AG04450 (cell line): ENCODE measurements at regions of chr11 and their contacts with region 1.

Region 1: GRCh38 chr11:34051349-34052035 is at the start of gene CAPRIN1:
- DNase-seq: peak; percentile 63
- H3K4me3 ChIP-seq: peak within 1 kb of the TSS; percentile 91
- H3K27ac ChIP-seq: peak within 1 kb of the TSS; percentile 99
- H3K27me3 ChIP-seq: no peaks in the 10 kb centered on the region
- CTCF ChIP-seq: no peak
- polyA plus RNA-seq, gene CAPRIN1: 202 and 251 TPM in 2 replicates

Region 2: DNA sequence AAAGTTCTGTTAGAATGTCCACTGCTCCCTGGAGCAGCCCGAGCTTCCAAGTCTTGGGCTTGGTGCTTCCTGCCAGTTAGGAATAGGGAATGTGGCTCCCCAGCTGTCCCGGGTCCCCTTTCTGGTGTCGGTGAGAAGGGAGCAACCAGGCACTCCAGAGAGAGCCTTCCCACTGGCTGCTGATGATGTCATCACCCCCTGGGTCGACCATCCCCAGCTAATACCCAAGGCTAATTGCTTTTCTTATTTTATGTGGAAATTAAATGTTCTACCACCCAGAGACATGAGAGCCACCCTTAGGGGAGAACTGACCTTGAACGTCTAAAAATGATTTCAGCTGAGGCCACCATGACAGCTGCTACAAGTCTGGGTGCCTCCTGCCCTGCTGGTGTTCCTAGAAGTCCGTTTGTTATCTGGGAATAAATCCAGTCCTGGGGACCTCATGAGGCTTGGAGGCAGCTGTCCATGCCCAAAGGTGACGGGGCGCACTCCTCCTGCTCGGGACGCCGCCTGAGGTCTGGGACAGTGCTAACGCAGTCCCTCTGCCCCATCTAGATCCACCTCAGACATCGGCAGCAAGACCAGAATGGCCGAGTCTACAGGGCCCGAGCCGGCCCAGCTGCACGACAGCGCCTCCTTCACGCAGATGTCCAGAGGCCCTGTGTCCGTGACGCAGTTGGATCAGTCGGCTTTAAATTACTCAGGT is 393.1 kb before region 1 on chr11:
- CTCF ChIA-PET with region 1: no interaction called
- POLR2A ChIA-PET with region 1: no interaction called
- DNase-seq: no peak
- H3K4me3 ChIP-seq: no peak overlapping the region
- H3K27ac ChIP-seq: no peak overlapping the region
- H3K27me3 ChIP-seq: no peaks in the 10 kb centered on the region
- CTCF ChIP-seq: no peak

Region 3: GRCh38 chr11:34105079-34105956 is 53.8 kb after region 1 on chr11 and contains the start of gene NAT10:
- CTCF ChIA-PET with region 1: no interaction called
- POLR2A ChIA-PET with region 1: interaction called, 16 read pairs
- DNase-seq: peak; percentile 97
- H3K4me3 ChIP-seq: peak within 1 kb of the TSS; percentile 95
- H3K27ac ChIP-seq: peak within 1 kb of the TSS; percentile 95
- H3K27me3 ChIP-seq: no peaks in the 10 kb centered on the region
- CTCF ChIP-seq: no peak
- polyA plus RNA-seq, gene NAT10: 30.2 and 30.5 TPM in 2 replicates